SK-N-SH (cell line): ENCODE measurements at regions of chr11 and their contacts with region 1.

Region 1: DNA sequence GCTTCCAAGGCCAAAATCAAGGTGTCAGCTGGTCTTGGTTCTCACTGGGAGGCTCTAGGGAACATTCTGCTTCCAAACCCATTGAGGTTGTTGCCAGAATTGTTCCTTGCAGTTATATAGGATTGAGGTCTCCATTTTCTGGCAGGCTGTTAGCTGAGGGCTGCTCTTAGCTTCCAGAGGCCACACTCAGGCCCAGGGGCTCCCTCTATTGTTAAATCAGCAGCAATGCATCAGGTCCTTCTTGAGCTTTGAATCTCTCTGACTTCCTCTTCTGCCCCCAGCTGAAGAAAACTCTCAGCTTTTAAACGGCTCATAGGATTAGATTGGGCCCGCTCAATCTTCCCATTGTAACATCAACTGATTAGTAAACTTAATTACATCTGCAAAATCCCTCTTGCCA is 39.3 kb upstream of the BSX start:
- DNase-seq: peak; percentile 76
- H3K4me3 ChIP-seq: no peak overlapping the region
- H3K27ac ChIP-seq: no peak overlapping the region
- H3K4me1 ChIP-seq: no peaks in the 10 kb centered on the region
- H3K27me3 ChIP-seq: 0 out of 2 replicates have a peak, but pooled peaks cover 4% of the 10 kb centered on the region
- CTCF ChIP-seq: peak; percentile 63
- EP300 ChIP-seq: no peak
- RAD21 ChIP-seq: peak; percentile 78

Region 2: GRCh38 chr11:122882857-122883645 is 137.9 kb before region 1 on chr11:
- CTCF ChIA-PET with region 1: interaction called, 10 read pairs
- POLR2A ChIA-PET with region 1: interaction called, 4 read pairs
- DNase-seq: peak; percentile 86
- H3K4me3 ChIP-seq: peak overlapping the region; percentile 67 to 76
- H3K27ac ChIP-seq: peak overlapping the region; percentile 85 to 87
- H3K4me1 ChIP-seq: peaks cover 3 to 10% of the 10 kb centered on the region in 2 experiments; a peak in 3 of 4 replicates
- H3K27me3 ChIP-seq: no peaks in the 10 kb centered on the region
- CTCF ChIP-seq: no peak
- EP300 ChIP-seq: no peak
- RAD21 ChIP-seq: no peak

Region 3: DNA sequence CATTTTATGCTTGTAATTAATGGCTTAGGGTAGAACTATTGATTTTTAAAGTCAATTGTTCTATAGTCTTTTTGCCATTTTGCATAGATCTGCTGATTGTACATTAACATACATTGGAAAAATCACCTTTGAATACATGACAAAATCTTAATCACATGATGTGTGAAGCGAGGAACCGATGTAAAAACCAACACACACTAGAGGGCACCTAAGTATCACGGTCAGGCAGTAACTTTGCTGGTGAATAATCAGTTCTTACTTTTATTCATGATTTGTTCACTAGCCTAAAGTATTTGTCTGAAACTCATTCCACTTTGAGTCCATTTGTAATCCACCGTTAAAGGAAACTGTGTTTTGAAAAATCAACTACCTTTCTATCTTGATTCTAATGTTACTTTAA is 110.2 kb before region 1 on chr11:
- CTCF ChIA-PET with region 1: interaction called, 46 read pairs
- POLR2A ChIA-PET with region 1: no interaction called
- DNase-seq: peak; percentile 30
- H3K4me3 ChIP-seq: no peak overlapping the region
- H3K27ac ChIP-seq: no peak overlapping the region
- H3K4me1 ChIP-seq: no peaks in the 10 kb centered on the region
- H3K27me3 ChIP-seq: no peaks in the 10 kb centered on the region
- CTCF ChIP-seq: peak; percentile 58
- EP300 ChIP-seq: no peak
- RAD21 ChIP-seq: peak; percentile 89

Region 4: DNA sequence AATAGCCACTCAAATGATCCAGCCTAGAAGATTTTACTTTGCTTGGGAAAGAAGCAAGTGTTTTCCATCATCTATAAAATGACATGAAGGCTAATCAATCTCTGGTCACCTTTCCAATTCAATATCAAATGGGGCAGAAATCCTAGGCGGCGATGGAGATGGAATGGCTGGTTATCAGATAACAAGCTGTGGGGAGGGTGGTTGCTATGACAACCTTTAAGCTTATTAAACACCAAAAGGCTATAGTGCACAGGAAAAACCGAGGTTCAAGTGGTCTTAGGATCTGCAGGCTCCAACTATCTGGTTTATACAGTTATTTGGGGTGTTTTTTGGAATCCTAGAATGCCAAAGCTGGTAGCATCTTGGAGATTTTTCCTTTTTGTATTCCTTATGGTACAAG is 25.4 kb before region 1 on chr11:
- CTCF ChIA-PET with region 1: interaction called, 15 read pairs
- POLR2A ChIA-PET with region 1: no interaction called
- DNase-seq: no peak
- H3K4me3 ChIP-seq: no peak overlapping the region
- H3K27ac ChIP-seq: no peak overlapping the region
- H3K4me1 ChIP-seq: no peaks in the 10 kb centered on the region
- H3K27me3 ChIP-seq: no peaks in the 10 kb centered on the region; the same call in 1 of the 2 replicates
- CTCF ChIP-seq: no peak
- EP300 ChIP-seq: no peak
- RAD21 ChIP-seq: no peak

Region 5: DNA sequence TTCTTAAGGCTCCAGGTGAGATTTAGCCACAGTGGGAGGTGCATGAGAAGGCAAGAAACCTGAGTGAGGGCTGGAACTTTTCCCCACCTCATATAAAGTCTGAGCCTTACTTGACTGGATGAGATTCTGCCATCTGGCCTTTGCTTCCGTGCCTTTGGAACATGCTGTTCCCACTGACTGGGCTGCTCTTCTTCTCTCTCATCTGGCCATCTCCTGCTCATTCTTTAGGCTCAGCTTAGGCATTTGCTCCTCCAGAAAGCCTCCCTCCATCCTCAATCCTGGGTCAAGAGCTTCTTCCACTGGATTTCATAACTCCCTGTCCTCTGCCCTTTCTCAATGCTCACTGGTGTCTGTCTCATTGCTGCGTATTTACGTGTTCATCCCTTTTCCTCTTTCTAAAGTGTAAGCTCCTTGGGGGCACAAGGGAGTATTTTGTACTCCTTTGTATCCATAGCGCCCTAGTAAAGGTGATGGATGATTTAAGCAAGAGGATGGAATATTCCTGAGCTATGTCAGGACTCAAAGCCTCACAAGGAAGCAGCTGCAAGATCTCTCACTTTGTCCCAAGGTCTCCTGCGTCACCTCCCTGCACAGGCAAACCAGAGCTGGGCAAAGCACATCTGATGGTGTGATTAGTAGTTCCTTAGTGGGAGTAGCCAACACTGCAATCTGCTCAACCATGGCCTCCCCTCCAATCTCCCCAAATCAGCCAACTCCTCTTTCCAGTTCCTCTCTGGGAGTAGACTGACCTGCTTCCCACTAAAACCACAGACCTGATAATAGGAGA is 25.7 kb after region 1 on chr11:
- CTCF ChIA-PET with region 1: interaction called, 25 read pairs
- POLR2A ChIA-PET with region 1: no interaction called
- DNase-seq: no peak
- H3K4me3 ChIP-seq: no peak overlapping the region
- H3K27ac ChIP-seq: no peak overlapping the region
- H3K4me1 ChIP-seq: no peaks in the 10 kb centered on the region
- H3K27me3 ChIP-seq: no peaks in the 10 kb centered on the region
- CTCF ChIP-seq: no peak
- EP300 ChIP-seq: no peak
- RAD21 ChIP-seq: no peak